ENCODE measurements at regions of chr7 and their contacts with region 1.

Region 1: GRCh38 chr7:120987683-120988590 is 574 bp upstream of the CPED1 start:
- DNase-seq: peak; percentile 82 to 90
- H3K4me3 ChIP-seq: peak overlapping the region; percentile 34 to 58 (median 38); a peak in 5 of 8 replicates
- H3K27ac ChIP-seq: no peak overlapping the region
- H3K4me1 ChIP-seq: peaks cover 0 to 4% (median 3%) of the 10 kb centered on the region in 4 experiments; a peak in 4 of 7 replicates
- H3K27me3 ChIP-seq: peaks cover 1 to 20% (median 12%) of the 10 kb centered on the region in 4 experiments; a peak in 6 of 7 replicates
- CTCF ChIP-seq: peak; percentile 78 to 91 (median 86)
- EP300 ChIP-seq: no peak
- POLR2A ChIP-seq: no peak
- RAD21 ChIP-seq: peak; percentile 87 to 93

Region 2: DNA sequence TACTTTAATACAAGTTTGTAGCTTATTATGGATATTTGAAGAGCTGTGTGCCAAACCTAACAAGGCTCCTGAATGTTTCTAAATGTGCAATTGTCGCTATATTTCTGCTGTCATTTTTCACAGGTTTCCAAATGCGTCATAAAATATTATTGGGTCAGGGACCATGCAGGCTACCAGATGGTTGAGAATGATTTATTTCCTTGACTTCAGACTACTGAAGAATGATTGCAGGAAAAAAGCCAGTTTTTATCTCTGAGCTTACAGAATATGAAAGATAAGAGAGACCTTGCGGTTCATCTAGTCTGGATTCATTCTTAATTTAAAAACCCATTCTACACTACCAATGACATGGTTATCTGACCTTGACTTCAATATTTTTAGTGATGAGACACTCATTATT is 185.2 kb before region 1 on chr7:
- CTCF ChIA-PET with region 1: no interaction called
- POLR2A ChIA-PET with region 1: no interaction called
- DNase-seq: no peak
- H3K4me3 ChIP-seq: no peak overlapping the region
- H3K27ac ChIP-seq: no peak overlapping the region
- H3K4me1 ChIP-seq: peaks cover 0 to 3% (median 0%) of the 10 kb centered on the region in 4 experiments; a peak in 1 of 7 replicates
- H3K27me3 ChIP-seq: no peaks in the 10 kb centered on the region
- CTCF ChIP-seq: no peak
- EP300 ChIP-seq: no peak
- POLR2A ChIP-seq: no peak
- RAD21 ChIP-seq: no peak

Region 3: DNA sequence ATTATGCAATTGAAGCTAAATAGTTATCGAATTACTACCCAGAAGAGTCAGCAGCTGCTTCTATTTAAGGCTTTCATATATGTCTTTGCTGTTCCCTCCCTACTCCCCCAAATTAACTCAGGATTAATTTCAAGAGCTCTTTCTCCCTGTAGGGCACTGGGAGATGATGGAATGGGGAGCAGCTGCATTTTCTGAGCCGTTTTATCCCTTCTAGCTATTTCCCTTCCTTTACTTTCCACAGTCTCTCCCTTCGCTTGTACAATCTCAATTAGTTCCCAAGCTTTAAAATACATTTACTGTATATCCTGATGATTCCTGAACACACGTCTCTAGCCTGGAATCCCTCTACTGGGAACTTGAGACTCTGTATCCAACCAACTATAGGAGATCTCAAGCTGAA is 110.2 kb before region 1 on chr7:
- CTCF ChIA-PET with region 1: no interaction called
- POLR2A ChIA-PET with region 1: no interaction called
- DNase-seq: no peak
- H3K4me3 ChIP-seq: no peak overlapping the region
- H3K27ac ChIP-seq: no peak overlapping the region
- H3K4me1 ChIP-seq: peaks cover 0 to 6% (median 0%) of the 10 kb centered on the region in 4 experiments; a peak in 1 of 7 replicates
- H3K27me3 ChIP-seq: no peaks in the 10 kb centered on the region
- CTCF ChIP-seq: no peak
- EP300 ChIP-seq: no peak
- POLR2A ChIP-seq: no peak
- RAD21 ChIP-seq: no peak

Region 4: GRCh38 chr7:120973849-120974248 is 14.1 kb before region 1 on chr7:
- CTCF ChIA-PET with region 1: interaction called, 21 read pairs
- POLR2A ChIA-PET with region 1: no interaction called
- DNase-seq: no peak
- H3K4me3 ChIP-seq: no peak overlapping the region
- H3K27ac ChIP-seq: no peak overlapping the region
- H3K4me1 ChIP-seq: no peaks in the 10 kb centered on the region
- H3K27me3 ChIP-seq: no peaks in the 10 kb centered on the region
- CTCF ChIP-seq: no peak
- EP300 ChIP-seq: no peak
- POLR2A ChIP-seq: no peak
- RAD21 ChIP-seq: no peak

Region 5: GRCh38 chr7:121057878-121058277 is 69.9 kb after region 1 on chr7:
- CTCF ChIA-PET with region 1: interaction called, 15 read pairs
- POLR2A ChIA-PET with region 1: no interaction called
- DNase-seq: no peak
- H3K4me3 ChIP-seq: no peak overlapping the region
- H3K27ac ChIP-seq: no peak overlapping the region
- H3K4me1 ChIP-seq: no peaks in the 10 kb centered on the region; a peak in 1 of 7 replicates
- H3K27me3 ChIP-seq: no peaks in the 10 kb centered on the region
- CTCF ChIP-seq: no peak
- EP300 ChIP-seq: no peak
- POLR2A ChIP-seq: no peak
- RAD21 ChIP-seq: no peak

Region 6: DNA sequence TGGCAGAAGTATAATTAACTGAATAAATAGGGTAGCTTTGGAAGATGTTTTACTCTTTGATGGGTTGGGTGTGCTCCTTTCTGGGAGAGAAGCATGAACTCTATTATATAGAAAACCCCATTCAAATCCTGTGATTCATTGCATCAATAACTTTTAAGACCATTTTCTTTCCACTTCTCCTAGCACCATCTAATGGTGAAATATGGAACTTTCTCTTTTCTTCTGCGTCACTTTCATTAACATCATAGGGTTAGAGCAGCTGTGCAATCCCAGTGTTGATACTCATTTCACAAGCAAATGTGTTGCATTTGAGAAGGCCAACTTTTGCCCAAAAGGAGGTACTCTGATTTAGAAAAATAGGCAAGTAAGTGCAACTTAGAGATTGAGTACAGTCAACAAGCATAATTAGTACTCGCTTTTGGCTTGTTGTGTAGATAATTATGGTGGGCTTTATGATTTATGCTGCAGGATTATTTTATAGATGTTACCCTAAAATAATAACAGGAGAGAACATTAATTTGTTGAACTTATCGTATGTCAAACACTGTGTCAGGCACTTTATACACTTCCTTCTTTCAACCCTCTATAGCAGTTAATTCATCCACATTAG is 93.5 kb after region 1 on chr7:
- CTCF ChIA-PET with region 1: interaction called, 139 read pairs
- POLR2A ChIA-PET with region 1: no interaction called
- DNase-seq: no peak
- H3K4me3 ChIP-seq: no peak overlapping the region
- H3K27ac ChIP-seq: no peak overlapping the region
- H3K4me1 ChIP-seq: no peaks in the 10 kb centered on the region
- H3K27me3 ChIP-seq: no peaks in the 10 kb centered on the region; a peak in 1 of 7 replicates
- CTCF ChIP-seq: peak in 2 of 3 experiments; percentile 38 to 59; a peak in 2 of 4 replicates
- EP300 ChIP-seq: no peak
- POLR2A ChIP-seq: no peak
- RAD21 ChIP-seq: peak; percentile 68 to 69

Region 7: DNA sequence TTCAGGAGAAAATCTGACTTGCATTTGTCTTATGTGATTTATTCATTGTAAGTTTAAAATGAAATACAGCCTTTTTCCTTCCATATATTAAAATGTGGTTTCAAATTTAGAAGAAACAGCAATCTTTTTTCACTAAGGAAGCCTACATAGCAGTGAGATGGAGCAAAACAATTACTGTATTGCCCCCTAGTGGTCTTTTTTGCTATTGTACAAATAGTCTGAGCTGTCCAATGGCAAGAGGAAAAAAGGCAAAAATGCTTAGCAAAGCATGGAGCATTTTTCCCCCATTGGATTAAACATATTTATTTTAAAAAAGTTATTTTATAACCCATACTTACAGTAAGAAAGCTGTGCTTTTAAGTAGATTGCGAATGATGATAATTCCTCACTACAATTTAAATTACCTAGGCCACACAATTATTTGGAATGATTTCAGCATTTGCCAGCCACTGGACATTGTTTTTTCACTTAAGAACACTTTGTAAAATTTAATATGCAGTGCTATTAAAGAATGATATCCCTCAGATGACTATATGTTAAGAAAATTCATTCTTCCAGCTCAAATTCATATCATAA is 120.1 kb after region 1 on chr7:
- CTCF ChIA-PET with region 1: interaction called, 86 read pairs
- POLR2A ChIA-PET with region 1: interaction called, 5 read pairs
- DNase-seq: no peak
- H3K4me3 ChIP-seq: no peak overlapping the region
- H3K27ac ChIP-seq: no peak overlapping the region
- H3K4me1 ChIP-seq: peaks cover 0 to 6% (median 2%) of the 10 kb centered on the region in 4 experiments; a peak in 1 of 7 replicates
- H3K27me3 ChIP-seq: no peaks in the 10 kb centered on the region
- CTCF ChIP-seq: peak in 2 of 3 experiments; percentile 48 to 69; a peak in 2 of 4 replicates
- EP300 ChIP-seq: no peak
- POLR2A ChIP-seq: no peak
- RAD21 ChIP-seq: peak; percentile 78

Measured in H1 (cell line).